Aorta (tissue), 5 donors: ENCODE measurements at regions of chr16 and their contacts with region 1.

Region 1: GRCh38 chr16:21277927-21278706 is at the start of gene CRYM:
- DNase-seq: peak; percentile 73 to 90
- ATAC-seq: peak; percentile 87
- H3K4me3 ChIP-seq: peak within 1 kb of the TSS; percentile 24 to 35
- H3K27ac ChIP-seq: no peak within 1 kb of the TSS
- H3K4me1 ChIP-seq: no peaks in the 10 kb centered on the region
- H3K27me3 ChIP-seq: no peaks in the 10 kb centered on the region
- total RNA-seq, gene CRYM: 0.30 TPM in 1 of 2 donors, not detected in the other

Region 2: DNA sequence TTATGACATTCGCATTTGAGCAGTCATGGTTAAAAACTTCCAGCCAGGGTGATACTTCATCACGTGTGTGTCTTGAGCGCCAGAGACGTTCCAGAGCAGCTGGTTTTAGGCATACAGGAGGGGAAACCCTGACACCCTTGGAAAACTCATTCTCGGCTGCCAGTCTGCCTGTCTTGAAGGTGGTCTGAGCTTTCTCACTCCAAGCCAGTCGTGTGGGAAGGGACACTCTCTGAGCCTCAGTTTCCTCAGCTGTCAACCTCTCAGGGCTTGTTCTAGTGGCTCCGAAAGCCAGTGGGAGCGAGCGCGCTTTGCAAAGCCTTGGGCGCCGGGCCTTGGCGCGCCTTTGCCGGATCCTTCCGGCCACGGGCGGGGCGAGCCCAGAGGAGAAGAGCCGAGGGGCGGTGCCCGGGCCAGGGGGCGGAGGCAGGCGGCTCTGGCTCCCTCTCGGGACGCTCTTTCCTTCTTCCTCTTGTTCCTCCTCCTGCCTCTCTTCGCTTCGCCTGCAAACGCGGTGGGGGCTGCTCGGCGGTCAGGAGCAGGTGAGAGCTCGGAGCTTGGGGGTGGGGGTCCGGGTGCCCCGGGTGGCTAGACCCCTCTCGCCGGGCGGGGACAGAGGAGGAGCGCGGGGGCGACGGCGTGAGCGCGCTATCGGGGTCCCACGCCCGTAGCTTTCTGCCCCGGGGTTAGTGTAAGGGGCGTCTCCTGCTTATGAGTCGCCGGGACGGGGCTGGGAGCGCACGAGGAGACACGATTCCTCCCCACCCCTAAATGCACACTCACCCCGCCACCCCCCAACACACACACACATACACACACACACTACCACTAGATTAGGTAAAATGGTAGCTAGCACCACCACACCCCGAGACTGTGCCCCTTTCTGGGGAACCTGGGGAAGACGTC is 119.7 kb before region 1 on chr16 and contains the start of gene LDAF1:
- intact Hi-C with region 1: loop called in 1 of 2 experiments (anchors 2 kb)
- DNase-seq: peak; percentile 92 to 96
- ATAC-seq: peak; percentile 95
- H3K4me3 ChIP-seq: peak within 1 kb of the TSS; percentile 78 to 94
- H3K27ac ChIP-seq: peak within 1 kb of the TSS; percentile 36 to 48
- H3K4me1 ChIP-seq: no peaks in the 10 kb centered on the region
- H3K27me3 ChIP-seq: no peaks in the 10 kb centered on the region
- total RNA-seq, gene LDAF1: 42.8 to 55.5 TPM

Region 3: DNA sequence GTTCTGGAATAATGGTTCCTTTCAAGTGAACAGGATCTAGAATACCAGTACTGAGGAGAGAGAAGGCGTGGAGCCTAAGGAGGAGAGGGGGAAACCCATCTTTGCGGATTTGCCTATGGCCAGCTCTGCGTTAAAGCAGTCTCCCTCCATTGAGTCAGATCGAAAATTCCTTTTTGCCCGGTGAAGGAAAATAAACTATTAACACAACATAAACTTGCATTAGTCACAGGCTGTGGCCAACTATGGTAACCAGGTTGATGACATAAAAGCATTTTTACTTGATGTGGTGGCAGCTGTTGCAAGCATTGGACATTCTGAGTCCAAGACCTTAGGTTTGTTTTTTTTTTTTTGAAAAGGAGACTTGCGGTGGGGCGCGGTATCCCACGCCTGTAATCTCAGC is 110.8 kb before region 1 on chr16:
- intact Hi-C with region 1: loop called in 1 of 2 experiments (anchors 5 kb)
- DNase-seq: no peak
- ATAC-seq: no peak
- H3K4me3 ChIP-seq: no peak overlapping the region
- H3K27ac ChIP-seq: no peak overlapping the region
- H3K4me1 ChIP-seq: peaks cover 0 to 1% of the 10 kb centered on the region in 2 donors
- H3K27me3 ChIP-seq: no peaks in the 10 kb centered on the region

Region 4: GRCh38 chr16:21184834-21185233 is 93.3 kb before region 1 on chr16:
- intact Hi-C with region 1: loop called (anchors 5 kb)
- DNase-seq: no peak
- ATAC-seq: no peak
- H3K4me3 ChIP-seq: no peak overlapping the region
- H3K27ac ChIP-seq: no peak overlapping the region
- H3K4me1 ChIP-seq: peaks cover 0 to 1% of the 10 kb centered on the region in 2 donors
- H3K27me3 ChIP-seq: no peaks in the 10 kb centered on the region

Region 5: GRCh38 chr16:21194771-21195301 is 83.3 kb before region 1 on chr16:
- intact Hi-C with region 1: loop called in 1 of 2 experiments (anchors 5 kb)
- DNase-seq: no peak
- ATAC-seq: no peak
- H3K4me3 ChIP-seq: no peak overlapping the region
- H3K27ac ChIP-seq: no peak overlapping the region
- H3K4me1 ChIP-seq: no peaks in the 10 kb centered on the region
- H3K27me3 ChIP-seq: peaks cover 0 to 2% of the 10 kb centered on the region in 2 donors

Region 6: GRCh38 chr16:21233521-21234150 is 44.5 kb before region 1 on chr16 and contains the start of gene ANKS4B:
- intact Hi-C with region 1: no loop called
- DNase-seq: no peak
- ATAC-seq: no peak
- H3K4me3 ChIP-seq: no peak within 1 kb of the TSS
- H3K27ac ChIP-seq: no peak within 1 kb of the TSS
- H3K4me1 ChIP-seq: no peaks in the 10 kb centered on the region
- H3K27me3 ChIP-seq: no peaks in the 10 kb centered on the region
- total RNA-seq, gene ANKS4B: not detected